ENCODE measurements at regions of chr1 and their contacts with region 1.

Region 1: DNA sequence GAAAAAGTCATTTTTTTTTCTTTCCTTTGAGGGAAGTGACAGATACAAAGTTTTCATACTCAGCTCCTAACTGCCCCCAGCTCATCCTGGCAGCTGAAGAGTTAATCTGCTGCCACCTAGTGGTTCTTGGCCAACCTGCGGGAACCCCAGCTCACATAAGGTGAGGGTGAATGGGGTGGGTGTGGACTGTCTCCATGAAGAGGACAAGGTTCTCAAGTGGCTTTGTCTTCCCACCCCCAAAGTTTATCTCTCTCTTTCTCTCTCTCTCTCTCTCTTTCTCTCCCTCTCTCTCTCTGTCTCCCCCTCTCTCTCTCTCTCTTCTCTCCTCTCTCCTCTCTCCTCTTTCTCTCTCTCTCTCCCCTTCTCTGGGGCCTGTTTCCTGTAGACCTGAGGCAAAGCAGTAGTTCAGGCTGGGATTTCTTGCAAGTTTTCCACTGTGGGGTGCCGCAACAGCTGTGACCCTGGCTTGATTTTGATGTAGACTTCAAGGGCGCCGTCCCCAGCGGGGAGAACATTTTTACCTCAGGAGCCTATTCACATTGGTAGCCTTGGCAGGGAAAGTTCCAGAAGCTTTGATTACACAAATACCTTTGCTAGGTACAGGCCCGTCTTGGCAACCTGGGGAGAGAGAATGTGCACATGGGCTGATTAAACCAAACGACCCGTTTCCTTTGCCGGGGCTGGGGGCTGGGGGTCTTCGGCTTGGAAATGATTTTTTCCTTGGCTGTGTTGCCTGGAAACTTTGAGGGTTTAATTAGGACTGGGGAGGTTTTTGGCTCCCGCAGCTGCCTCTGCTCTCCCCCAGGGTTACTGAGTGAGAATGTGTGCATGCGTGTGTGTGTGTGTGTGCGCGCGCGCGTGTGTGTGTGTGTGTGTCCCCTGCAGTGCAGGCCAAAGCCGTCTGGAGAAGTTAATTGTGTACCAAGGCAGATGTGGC is 135.9 kb downstream of the TM2D1 start:
- DNase-seq: peak; percentile 69 to 80 (median 72)
- ATAC-seq: peak; percentile 99
- H3K4me3 ChIP-seq: no peak overlapping the region
- H3K27ac ChIP-seq: no peak overlapping the region
- H3K4me1 ChIP-seq: no peaks in the 10 kb centered on the region
- H3K27me3 ChIP-seq: peaks cover 22 to 35% of the 10 kb centered on the region in 2 experiments
- CTCF ChIP-seq: peak; percentile 84 to 87 (median 85)
- EP300 ChIP-seq: no peak
- POLR2A ChIP-seq: no peak
- RAD21 ChIP-seq: peak; percentile 73 to 89

Region 2: GRCh38 chr1:60848583-60849188 is 740.3 kb before region 1 on chr1:
- CTCF ChIA-PET with region 1: no interaction called
- POLR2A ChIA-PET with region 1: no interaction called
- in situ Hi-C with region 1: no loop called
- intact Hi-C with region 1: loop called (anchors 2 kb)
- DNase-seq: peak in 2 of 4 experiments; percentile 19 to 53
- ATAC-seq: peak; percentile 90
- H3K4me3 ChIP-seq: no peak overlapping the region
- H3K27ac ChIP-seq: no peak overlapping the region
- H3K4me1 ChIP-seq: no peaks in the 10 kb centered on the region
- H3K27me3 ChIP-seq: no peaks in the 10 kb centered on the region
- CTCF ChIP-seq: peak; percentile 43 to 67 (median 54); a peak in 5 of 6 replicates
- EP300 ChIP-seq: peak; percentile 70
- POLR2A ChIP-seq: no peak
- RAD21 ChIP-seq: peak; percentile 67 to 80

Region 3: GRCh38 chr1:60969971-60970509 is 619.0 kb before region 1 on chr1:
- CTCF ChIA-PET with region 1: interaction called, 3 read pairs
- POLR2A ChIA-PET with region 1: no interaction called
- in situ Hi-C with region 1: loop called (anchors 10 kb)
- intact Hi-C with region 1: loop called (anchors 1 kb)
- DNase-seq: peak in 2 of 4 experiments; percentile 52 to 55
- ATAC-seq: peak; percentile 83
- H3K4me3 ChIP-seq: no peak overlapping the region
- H3K27ac ChIP-seq: no peak overlapping the region
- H3K4me1 ChIP-seq: peaks cover 3 to 19% of the 10 kb centered on the region in 2 experiments; a peak in 4 of 5 replicates
- H3K27me3 ChIP-seq: no peaks in the 10 kb centered on the region
- CTCF ChIP-seq: peak; percentile 45 to 74 (median 67); a peak in 5 of 6 replicates
- EP300 ChIP-seq: no peak
- POLR2A ChIP-seq: no peak
- RAD21 ChIP-seq: peak; percentile 76 to 89

Region 4: GRCh38 chr1:61453111-61453961 is 135.7 kb before region 1 on chr1:
- CTCF ChIA-PET with region 1: no interaction called
- POLR2A ChIA-PET with region 1: no interaction called
- in situ Hi-C with region 1: no loop called
- intact Hi-C with region 1: loop called (anchors 10 kb)
- DNase-seq: peak; percentile 59 to 85 (median 68)
- ATAC-seq: peak; percentile 97
- H3K4me3 ChIP-seq: no peak overlapping the region
- H3K27ac ChIP-seq: no peak overlapping the region
- H3K4me1 ChIP-seq: peaks cover 3 to 7% of the 10 kb centered on the region in 2 experiments; a peak in 3 of 5 replicates
- H3K27me3 ChIP-seq: no peaks in the 10 kb centered on the region
- CTCF ChIP-seq: peak; percentile 74 to 85 (median 83)
- EP300 ChIP-seq: no peak
- POLR2A ChIP-seq: no peak
- RAD21 ChIP-seq: peak; percentile 80 to 82

Region 5: DNA sequence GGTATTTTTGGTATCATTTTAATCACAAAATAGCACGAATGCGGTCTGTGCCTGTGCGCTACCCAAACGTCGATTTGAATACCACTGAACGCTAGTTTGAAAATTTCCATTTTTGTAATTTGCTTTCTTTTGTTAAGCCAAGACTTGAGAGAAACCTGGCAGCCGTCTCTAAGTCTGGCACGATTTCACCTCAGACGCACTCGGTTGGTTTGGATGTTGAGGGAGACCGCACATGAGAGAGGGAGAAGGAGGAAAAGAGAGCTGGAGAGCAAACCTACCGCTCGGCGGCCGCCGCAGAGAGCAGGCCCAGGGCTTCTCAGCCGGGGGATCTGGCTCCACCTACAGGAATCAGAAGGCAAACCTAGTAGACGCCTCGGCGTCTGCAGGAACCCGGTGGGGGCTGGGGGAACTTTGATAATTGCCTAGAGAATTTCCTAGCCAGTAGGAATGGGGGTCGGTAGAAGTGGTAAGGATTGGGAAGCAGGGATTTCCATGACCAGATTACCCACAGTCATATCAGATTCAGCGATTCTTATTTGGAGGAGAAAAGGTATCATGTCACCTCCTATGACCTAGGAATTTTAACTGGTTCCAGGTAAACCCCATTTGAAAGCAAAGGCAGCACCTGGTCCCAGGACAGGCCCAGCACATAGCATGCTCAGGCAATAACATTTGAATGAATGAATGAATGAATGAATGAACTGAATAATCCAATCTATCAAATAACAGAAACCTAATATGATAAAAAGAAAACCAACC is 52.8 kb after region 1 on chr1:
- CTCF ChIA-PET with region 1: no interaction called
- POLR2A ChIA-PET with region 1: no interaction called
- in situ Hi-C with region 1: no loop called
- intact Hi-C with region 1: loop called (anchors 5 kb)
- DNase-seq: peak; percentile 47 to 82 (median 64)
- ATAC-seq: peak; percentile 99
- H3K4me3 ChIP-seq: no peak overlapping the region
- H3K27ac ChIP-seq: no peak overlapping the region
- H3K4me1 ChIP-seq: peaks cover 0 to 8% of the 10 kb centered on the region in 2 experiments; a peak in 1 of 5 replicates
- H3K27me3 ChIP-seq: peaks cover 4 to 8% of the 10 kb centered on the region in 2 experiments; a peak in 3 of 5 replicates
- CTCF ChIP-seq: peak; percentile 76 to 92 (median 82)
- EP300 ChIP-seq: no peak
- POLR2A ChIP-seq: no peak
- RAD21 ChIP-seq: peak; percentile 49 to 74

Region 6: GRCh38 chr1:61812916-61813315 is 223.9 kb after region 1 on chr1:
- CTCF ChIA-PET with region 1: no interaction called
- POLR2A ChIA-PET with region 1: no interaction called
- in situ Hi-C with region 1: no loop called
- intact Hi-C with region 1: no loop called
- DNase-seq: no peak
- ATAC-seq: no peak
- H3K4me3 ChIP-seq: no peak overlapping the region
- H3K27ac ChIP-seq: no peak overlapping the region
- H3K4me1 ChIP-seq: no peaks in the 10 kb centered on the region
- H3K27me3 ChIP-seq: peaks cover 5 to 8% of the 10 kb centered on the region in 2 experiments
- CTCF ChIP-seq: no peak
- EP300 ChIP-seq: no peak
- POLR2A ChIP-seq: no peak
- RAD21 ChIP-seq: no peak